Activated CD4-positive, alpha-beta T cell treated with anti-CD3 and anti-CD28 coated beads for 36 hours (primary cell): ENCODE measurements at regions of chr6 and their contacts with region 1.

Region 1: DNA sequence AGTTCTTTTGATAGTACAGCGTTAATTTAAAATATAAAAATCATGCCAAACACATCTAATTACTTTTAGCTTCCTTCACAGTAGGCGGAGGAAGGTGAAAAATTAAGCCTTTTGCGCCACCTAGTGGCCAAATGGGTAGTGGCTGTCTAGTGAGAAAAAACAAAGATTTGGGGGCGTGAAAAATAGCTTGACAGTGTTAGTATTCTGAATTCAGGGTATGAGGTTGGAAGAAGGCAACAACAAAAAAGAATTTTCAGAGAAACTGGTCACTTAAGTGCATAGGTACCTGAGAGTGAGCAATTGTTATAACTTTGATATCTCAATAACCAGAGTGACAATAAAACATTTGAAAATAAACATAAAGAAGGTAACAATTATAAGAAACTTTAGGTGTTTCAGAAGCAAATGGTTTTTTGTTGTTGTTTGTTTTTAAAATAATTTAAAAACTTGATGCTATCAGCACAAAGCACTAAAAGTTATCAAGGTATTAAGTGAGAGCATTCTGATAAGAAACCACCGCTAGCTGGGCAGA is 14.3 kb downstream of the PSMB9 start:
- DNase-seq: peak; percentile 92
- ATAC-seq: peak; percentile 73
- H3K4me3 Mint-ChIP-seq: no peak overlapping the region
- H3K27ac Mint-ChIP-seq: no peak overlapping the region
- H3K4me1 Mint-ChIP-seq: peaks cover 35% of the 10 kb centered on the region
- H3K27me3 Mint-ChIP-seq: peaks cover 8% of the 10 kb centered on the region

Region 2: GRCh38 chr6:32413427-32414047 is 454.8 kb before region 1 on chr6:
- CTCF ChIA-PET with region 1: interaction called, 8 read pairs
- POLR2A ChIA-PET with region 1: no interaction called
- intact Hi-C with region 1: loop called (anchors 2 to 5 kb)
- DNase-seq: peak; percentile 93
- ATAC-seq: peak; percentile 93
- H3K4me3 Mint-ChIP-seq: no peak overlapping the region
- H3K27ac Mint-ChIP-seq: no peak overlapping the region
- H3K4me1 Mint-ChIP-seq: peaks cover 5% of the 10 kb centered on the region
- H3K27me3 Mint-ChIP-seq: peaks cover 39% of the 10 kb centered on the region

Region 3: GRCh38 chr6:32713241-32713640 is 155.1 kb before region 1 on chr6:
- CTCF ChIA-PET with region 1: no interaction called
- POLR2A ChIA-PET with region 1: no interaction called
- intact Hi-C with region 1: no loop called
- DNase-seq: no peak
- ATAC-seq: no peak
- H3K4me3 Mint-ChIP-seq: no peak overlapping the region
- H3K27ac Mint-ChIP-seq: no peak overlapping the region
- H3K4me1 Mint-ChIP-seq: no peaks in the 10 kb centered on the region
- H3K27me3 Mint-ChIP-seq: no peaks in the 10 kb centered on the region

Region 4: DNA sequence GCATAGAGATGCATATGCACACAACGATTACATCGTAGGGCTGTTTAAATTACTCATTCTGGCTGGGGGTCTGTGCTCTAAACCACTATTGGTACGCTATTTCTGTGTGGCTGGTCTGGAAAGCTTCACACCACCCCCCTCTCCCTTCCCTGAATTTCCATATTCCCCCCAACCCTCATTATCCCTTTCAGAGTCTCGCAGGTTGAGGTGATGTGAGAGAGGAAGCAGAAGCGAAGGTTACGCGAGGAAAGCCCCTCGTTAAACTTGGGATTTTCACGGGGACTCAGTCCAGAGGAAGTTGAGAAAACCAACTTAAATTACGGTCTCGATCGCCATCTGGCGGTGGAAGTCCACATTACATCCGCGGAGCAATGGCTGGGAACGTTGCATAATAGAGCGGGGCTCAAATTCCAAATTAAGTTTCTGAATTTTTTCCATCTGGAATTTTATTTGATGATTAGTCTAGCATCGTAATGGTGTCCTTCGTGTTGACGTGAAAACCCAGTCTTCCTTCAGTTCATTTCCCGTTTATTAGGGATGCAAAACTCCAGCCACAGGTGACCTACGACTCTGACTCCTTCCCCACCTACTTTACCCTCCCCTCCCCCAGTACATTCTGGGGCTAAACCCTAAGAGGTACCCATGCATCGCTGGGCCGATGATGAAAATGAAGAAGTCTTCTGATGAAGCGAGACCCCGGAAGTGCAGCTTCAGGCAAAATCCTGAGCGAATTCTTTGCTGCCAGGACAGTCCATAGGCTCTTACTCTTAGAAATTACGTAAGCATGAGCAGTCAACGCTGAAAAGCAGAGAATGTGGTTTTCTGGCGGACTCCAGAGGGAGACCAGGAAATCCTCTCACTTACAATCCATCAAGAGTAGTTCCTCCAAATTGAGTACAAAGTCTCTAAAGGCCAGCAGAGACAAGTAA is 71.2 kb before region 1 on chr6:
- CTCF ChIA-PET with region 1: interaction called, 30 read pairs
- POLR2A ChIA-PET with region 1: no interaction called
- intact Hi-C with region 1: loop called (anchors 1 kb)
- DNase-seq: peak; percentile 87
- ATAC-seq: peak; percentile 68
- H3K4me3 Mint-ChIP-seq: peak overlapping the region; percentile 54
- H3K27ac Mint-ChIP-seq: peak overlapping the region; percentile 43
- H3K4me1 Mint-ChIP-seq: peaks cover 22% of the 10 kb centered on the region
- H3K27me3 Mint-ChIP-seq: peaks cover 27% of the 10 kb centered on the region

Region 5: GRCh38 chr6:32825966-32826365 is 42.4 kb before region 1 on chr6:
- CTCF ChIA-PET with region 1: interaction called, 42 read pairs
- POLR2A ChIA-PET with region 1: no interaction called
- intact Hi-C with region 1: no loop called
- DNase-seq: no peak
- ATAC-seq: no peak
- H3K4me3 Mint-ChIP-seq: no peak overlapping the region
- H3K27ac Mint-ChIP-seq: no peak overlapping the region
- H3K4me1 Mint-ChIP-seq: peaks cover 28% of the 10 kb centered on the region
- H3K27me3 Mint-ChIP-seq: no peaks in the 10 kb centered on the region

Region 6: GRCh38 chr6:32853541-32854375 is 14.6 kb before region 1 on chr6 and contains the starts of genes PSMB9 and TAP1:
- CTCF ChIA-PET with region 1: interaction called, 153 read pairs
- POLR2A ChIA-PET with region 1: interaction called, 10 read pairs
- intact Hi-C with region 1: loop called (anchors 1 kb)
- DNase-seq: peak; percentile 98
- ATAC-seq: peak; percentile 84
- H3K4me3 Mint-ChIP-seq: peak within 1 kb of the TSS; percentile 100
- H3K27ac Mint-ChIP-seq: peak within 1 kb of the TSS; percentile 99
- H3K4me1 Mint-ChIP-seq: peaks cover 62% of the 10 kb centered on the region
- H3K27me3 Mint-ChIP-seq: no peaks in the 10 kb centered on the region
- total RNA-seq, gene PSMB9: 210 to 282 TPM
- total RNA-seq, gene TAP1: 191 to 255 TPM

Region 7: GRCh38 chr6:32952817-32953739 is 84.8 kb after region 1 on chr6 and contains the start of gene HLA-DMA:
- CTCF ChIA-PET with region 1: interaction called, 17 read pairs
- POLR2A ChIA-PET with region 1: no interaction called
- intact Hi-C with region 1: no loop called
- DNase-seq: peak; percentile 81
- ATAC-seq: peak; percentile 97
- H3K4me3 Mint-ChIP-seq: peak within 1 kb of the TSS; percentile 68
- H3K27ac Mint-ChIP-seq: peak within 1 kb of the TSS; percentile 76
- H3K4me1 Mint-ChIP-seq: peaks cover 56% of the 10 kb centered on the region
- H3K27me3 Mint-ChIP-seq: no peaks in the 10 kb centered on the region
- total RNA-seq, gene HLA-DMA: 11.8 TPM